BJ (cell line): ENCODE measurements at regions of chr19 and their contacts with region 1.

Region 1: DNA sequence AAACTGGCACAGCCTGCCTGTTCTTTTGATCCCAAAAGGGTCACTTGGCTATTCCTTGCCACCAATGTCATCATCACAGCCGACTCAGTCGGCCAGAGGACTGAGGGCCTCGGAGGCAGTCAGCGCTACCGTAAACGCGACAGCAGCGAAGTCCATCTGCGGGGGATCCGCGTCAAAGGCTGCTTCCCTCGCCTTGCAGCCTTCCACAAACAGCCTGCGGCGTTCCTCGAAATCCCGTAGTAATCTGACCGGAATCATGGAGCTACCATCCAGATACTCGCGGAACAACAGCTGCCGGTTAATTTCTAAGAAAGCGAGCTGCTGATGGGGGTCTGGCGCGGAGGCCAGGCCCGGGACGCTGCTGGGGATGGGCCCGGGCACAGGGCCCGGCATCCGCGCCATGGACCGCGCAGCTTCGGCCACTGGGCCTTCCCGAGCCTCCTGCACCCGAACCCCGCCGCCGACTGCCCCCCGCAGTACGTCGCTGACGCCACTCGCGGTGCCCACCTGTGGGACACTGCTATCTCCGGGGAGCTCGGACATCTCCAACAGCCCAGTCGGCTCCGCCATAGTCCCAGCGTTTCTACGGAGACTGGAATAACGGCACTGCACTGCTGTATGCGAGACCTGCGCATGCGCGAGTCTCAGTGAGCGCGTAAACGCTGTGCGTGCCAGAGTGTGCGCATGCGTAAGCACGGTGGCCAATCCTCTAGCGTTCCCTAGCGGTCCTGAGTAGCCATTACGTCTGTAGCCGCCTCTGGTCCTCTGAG is at the start of gene EID2B:
- DNase-seq: peak; percentile 66
- H3K4me3 ChIP-seq: peak within 1 kb of the TSS; percentile 74
- H3K27me3 ChIP-seq: no peaks in the 10 kb centered on the region
- CTCF ChIP-seq: peak; percentile 96
- polyA plus RNA-seq, gene EID2B: 2.2 and 2.3 TPM in 2 replicates

Region 2: GRCh38 chr19:39406656-39407393 is 125.6 kb before region 1 on chr19 and contains the start of gene ZFP36:
- CTCF ChIA-PET with region 1: interaction called, 7 read pairs
- POLR2A ChIA-PET with region 1: interaction called, 13 read pairs
- DNase-seq: no peak
- H3K4me3 ChIP-seq: peak within 1 kb of the TSS; percentile 86
- H3K27me3 ChIP-seq: no peaks in the 10 kb centered on the region
- CTCF ChIP-seq: peak; percentile 14; the same call in 1 of the 2 replicates
- polyA plus RNA-seq, gene ZFP36: 4.8 and 9.5 TPM in 2 replicates

Region 3: DNA sequence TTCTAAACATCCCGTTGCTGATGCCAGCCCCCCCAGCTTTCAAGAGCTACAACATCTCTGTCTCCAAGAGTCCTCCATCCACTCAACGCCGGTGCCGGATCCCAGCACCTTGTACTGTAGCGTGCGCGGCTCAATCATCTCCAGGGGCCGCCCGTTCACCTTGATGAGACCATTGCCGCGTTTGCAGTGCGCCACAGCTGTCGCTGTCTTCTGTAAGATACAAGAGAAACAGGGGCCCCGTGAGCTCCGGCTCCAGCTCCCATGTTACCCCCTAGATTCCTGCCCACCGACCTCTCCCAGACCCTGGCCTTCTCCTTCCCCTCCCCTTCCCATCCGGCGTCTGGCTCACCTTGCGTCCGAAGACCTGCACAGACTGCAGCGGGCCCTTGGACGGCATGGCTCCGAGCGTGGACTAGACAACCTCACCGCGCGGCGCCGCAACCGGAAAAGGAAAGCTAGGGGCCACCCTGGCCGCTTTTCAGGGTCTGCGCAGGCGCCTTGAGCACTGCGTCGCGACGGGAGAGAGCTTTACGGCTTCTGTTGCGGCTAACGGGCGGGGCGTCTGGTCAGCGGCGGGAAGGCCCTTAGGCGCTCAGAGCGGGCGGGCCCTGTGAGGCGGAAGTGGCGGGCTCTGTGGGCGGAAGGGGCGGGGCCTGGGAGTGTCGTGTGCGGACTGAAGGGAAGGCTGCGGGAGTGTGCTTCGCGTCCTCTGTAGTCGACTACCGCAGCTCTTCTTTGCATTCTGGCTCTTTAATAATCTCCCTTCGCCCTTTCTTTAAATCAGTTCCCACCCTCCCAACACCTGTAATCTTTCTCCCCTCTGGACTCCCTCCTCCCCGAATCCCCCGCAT is 96.7 kb before region 1 on chr19 and contains the start of gene RPS16:
- CTCF ChIA-PET with region 1: interaction called, 41 read pairs
- POLR2A ChIA-PET with region 1: interaction called, 4 read pairs
- DNase-seq: peak; percentile 66
- H3K4me3 ChIP-seq: peak within 1 kb of the TSS; percentile 98
- H3K27me3 ChIP-seq: no peaks in the 10 kb centered on the region
- CTCF ChIP-seq: no peak
- polyA plus RNA-seq, gene RPS16: 2,401 and 2,896 TPM in 2 replicates

Region 4: DNA sequence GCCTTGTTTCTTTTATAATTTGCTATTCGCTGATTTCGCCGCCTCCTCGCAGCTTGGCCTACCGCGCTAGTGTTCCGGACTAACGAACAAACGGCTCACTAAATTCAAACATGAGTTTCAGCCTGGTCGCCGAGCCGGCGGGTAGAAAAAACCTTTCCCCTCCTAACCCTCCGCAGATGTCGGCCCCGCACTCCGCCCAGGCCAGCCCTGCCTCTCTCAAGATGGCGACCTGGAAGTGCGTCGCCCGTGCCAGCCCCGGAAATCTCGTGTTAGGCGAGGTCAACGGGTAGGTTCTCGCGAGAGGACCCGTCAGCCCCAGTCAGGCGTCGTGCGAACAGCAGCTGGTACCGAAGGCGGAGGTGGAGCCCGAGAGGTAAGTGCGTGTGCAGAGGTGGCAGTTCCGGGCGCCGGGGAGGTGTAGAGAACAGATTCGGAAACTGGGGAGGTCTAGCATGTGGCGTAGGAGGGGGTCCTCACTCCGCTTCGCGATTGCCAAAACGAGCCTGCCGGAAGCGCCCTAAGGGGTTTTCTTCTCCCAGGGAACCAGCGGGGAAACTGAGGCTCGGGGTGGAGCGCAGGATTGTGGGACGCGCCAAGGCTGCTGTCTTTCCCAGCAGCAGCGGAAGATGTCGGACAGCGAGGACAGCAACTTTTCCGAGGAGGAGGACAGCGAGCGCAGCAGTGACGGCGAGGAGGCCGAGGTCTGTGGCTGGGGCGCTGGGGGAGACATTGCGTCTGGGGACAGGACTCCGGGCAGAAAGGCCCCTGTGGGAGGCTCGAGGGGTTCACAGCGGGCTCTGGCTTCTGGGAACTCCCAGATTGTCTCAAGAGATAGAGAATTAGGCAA is 86.9 kb before region 1 on chr19 and contains the start of gene SUPT5H:
- CTCF ChIA-PET with region 1: interaction called, 41 read pairs
- POLR2A ChIA-PET with region 1: no interaction called
- DNase-seq: peak; percentile 83
- H3K4me3 ChIP-seq: peak within 1 kb of the TSS; percentile 90
- H3K27me3 ChIP-seq: no peaks in the 10 kb centered on the region
- CTCF ChIP-seq: no peak
- polyA plus RNA-seq, gene SUPT5H: 55.2 and 81.8 TPM in 2 replicates

Region 5: GRCh38 chr19:39474139-39474622 is 58.2 kb before region 1 on chr19:
- CTCF ChIA-PET with region 1: interaction called, 33 read pairs
- POLR2A ChIA-PET with region 1: no interaction called
- DNase-seq: no peak
- H3K4me3 ChIP-seq: no peak overlapping the region
- H3K27me3 ChIP-seq: no peaks in the 10 kb centered on the region
- CTCF ChIP-seq: peak; percentile 93

Region 6: GRCh38 chr19:39497996-39498797 is 34.2 kb before region 1 on chr19:
- CTCF ChIA-PET with region 1: interaction called, 15 read pairs
- POLR2A ChIA-PET with region 1: interaction called, 3 read pairs
- DNase-seq: no peak
- H3K4me3 ChIP-seq: no peak overlapping the region
- H3K27me3 ChIP-seq: peaks cover 22% of the 10 kb centered on the region
- CTCF ChIP-seq: peak; percentile 43; the same call in 1 of the 2 replicates